GM12878 (cell line): ENCODE measurements at regions of chr6 and their contacts with region 1.

Region 1: GRCh38 chr6:16731478-16732051 is 29.7 kb downstream of the ATXN1 start:
- DNase-seq: peak; percentile 61
- ATAC-seq: peak; percentile 95
- H3K4me3 ChIP-seq: peak overlapping the region; percentile 59; the same call in 1 of the 2 replicates
- H3K27ac ChIP-seq: peak overlapping the region; percentile 28; the same call in 1 of the 2 replicates
- H3K4me1 ChIP-seq: peaks cover 17% of the 10 kb centered on the region
- H3K27me3 ChIP-seq: no peaks in the 10 kb centered on the region
- CTCF ChIP-seq: no peak
- EP300 ChIP-seq: peak; percentile 86 to 89
- POLR2A ChIP-seq: no peak
- RAD21 ChIP-seq: no peak

Region 2: DNA sequence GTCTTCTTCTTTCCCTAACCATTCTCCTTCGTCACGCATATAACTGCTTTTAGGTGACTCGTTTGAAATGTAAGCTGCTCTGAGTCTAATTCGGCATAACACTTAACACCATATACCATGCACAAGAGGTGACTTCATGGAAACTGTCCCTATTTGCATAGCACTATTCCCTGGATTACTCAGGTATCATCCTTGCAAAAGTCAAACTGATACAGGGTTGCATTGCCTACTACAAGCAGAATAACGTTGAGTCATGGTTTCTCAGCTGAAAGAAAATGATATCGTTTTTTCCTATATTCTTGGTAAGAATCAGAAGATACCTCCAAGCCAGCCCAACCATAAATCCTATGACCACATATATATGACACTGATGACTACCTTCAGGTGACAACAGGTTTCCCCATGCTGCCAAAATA is 197.8 kb before region 1 on chr6:
- CTCF ChIA-PET with region 1: no interaction called
- POLR2A ChIA-PET with region 1: no interaction called
- RAD21 ChIA-PET with region 1: no interaction called
- SMC1A ChIA-PET with region 1: no interaction called
- in situ Hi-C with region 1: no loop called
- intact Hi-C with region 1: no loop called
- DNase-seq: no peak
- ATAC-seq: peak; percentile 27
- H3K4me3 ChIP-seq: no peak overlapping the region
- H3K27ac ChIP-seq: no peak overlapping the region
- H3K4me1 ChIP-seq: no peaks in the 10 kb centered on the region
- H3K27me3 ChIP-seq: no peaks in the 10 kb centered on the region
- CTCF ChIP-seq: no peak
- EP300 ChIP-seq: no peak
- POLR2A ChIP-seq: no peak
- RAD21 ChIP-seq: no peak

Region 3: DNA sequence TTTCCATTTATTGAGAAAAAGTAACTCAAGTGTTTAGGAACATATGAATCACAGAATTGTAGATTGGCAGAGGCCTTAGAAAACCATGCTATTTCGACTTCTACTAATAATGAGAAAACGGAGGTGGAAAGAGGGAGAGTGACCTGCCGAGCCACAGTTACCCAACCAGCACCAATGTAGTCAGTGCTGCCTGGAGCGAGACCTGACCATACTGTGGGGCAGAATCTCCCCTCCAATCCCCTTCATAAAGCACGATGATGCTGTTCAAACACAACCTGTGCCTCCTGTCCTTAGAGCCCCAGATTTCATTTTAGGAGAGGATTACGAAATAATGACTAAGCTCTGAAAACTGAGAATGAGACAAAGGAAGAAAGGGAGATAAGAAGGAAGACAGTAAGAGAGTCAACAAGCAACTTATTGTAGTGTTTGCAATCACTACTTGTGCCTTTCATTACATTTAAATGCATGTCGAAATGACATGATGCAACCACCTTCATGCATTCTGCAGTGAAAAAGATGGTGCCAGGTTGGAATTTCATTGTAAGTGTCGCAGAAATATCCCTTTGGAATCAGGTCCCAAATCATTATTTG is 40.9 kb before region 1 on chr6:
- CTCF ChIA-PET with region 1: interaction called, 5 read pairs
- POLR2A ChIA-PET with region 1: no interaction called
- RAD21 ChIA-PET with region 1: interaction called, 3 read pairs
- SMC1A ChIA-PET with region 1: interaction called, 15 read pairs
- in situ Hi-C with region 1: no loop called
- intact Hi-C with region 1: no loop called
- DNase-seq: no peak
- ATAC-seq: peak; percentile 92
- H3K4me3 ChIP-seq: peak overlapping the region; percentile 13; the same call in 1 of the 2 replicates
- H3K27ac ChIP-seq: peak overlapping the region; percentile 13; the same call in 1 of the 2 replicates
- H3K4me1 ChIP-seq: peaks cover 44% of the 10 kb centered on the region
- H3K27me3 ChIP-seq: no peaks in the 10 kb centered on the region
- CTCF ChIP-seq: no peak
- EP300 ChIP-seq: peak; percentile 73 to 82
- POLR2A ChIP-seq: peak; percentile 32; the same call in 1 of the 2 replicates
- RAD21 ChIP-seq: no peak

Region 4: GRCh38 chr6:16747232-16748024 is 15.9 kb after region 1 on chr6:
- CTCF ChIA-PET with region 1: interaction called, 9 read pairs
- POLR2A ChIA-PET with region 1: interaction called, 6 read pairs
- RAD21 ChIA-PET with region 1: interaction called, 3 read pairs
- SMC1A ChIA-PET with region 1: interaction called, 36 read pairs
- in situ Hi-C with region 1: no loop called
- intact Hi-C with region 1: no loop called
- DNase-seq: no peak
- ATAC-seq: peak; percentile 44
- H3K4me3 ChIP-seq: no peak overlapping the region
- H3K27ac ChIP-seq: no peak overlapping the region
- H3K4me1 ChIP-seq: no peaks in the 10 kb centered on the region
- H3K27me3 ChIP-seq: no peaks in the 10 kb centered on the region
- CTCF ChIP-seq: no peak
- EP300 ChIP-seq: no peak
- POLR2A ChIP-seq: no peak
- RAD21 ChIP-seq: no peak

Region 5: DNA sequence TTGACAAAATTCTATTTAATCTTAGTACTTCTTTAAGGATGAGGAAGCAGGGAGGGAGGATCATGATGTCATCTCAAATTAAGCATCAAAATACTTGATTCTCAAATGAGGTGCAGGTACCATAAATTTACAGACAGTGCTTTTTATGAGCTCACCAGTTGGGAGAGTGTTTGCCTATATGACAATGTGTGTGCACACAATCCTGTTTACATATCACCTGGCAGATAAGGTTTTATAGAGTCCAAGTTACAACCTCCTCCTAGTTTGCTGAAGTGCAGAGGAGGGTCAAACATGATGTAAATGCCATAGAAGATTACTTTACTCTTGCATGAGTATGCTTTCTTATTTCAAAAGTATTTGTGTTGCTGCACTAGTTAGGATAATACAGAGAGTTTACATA is 23.3 kb after region 1 on chr6:
- CTCF ChIA-PET with region 1: interaction called, 20 read pairs
- POLR2A ChIA-PET with region 1: interaction called, 4 read pairs
- RAD21 ChIA-PET with region 1: interaction called, 29 read pairs
- SMC1A ChIA-PET with region 1: interaction called, 36 read pairs
- in situ Hi-C with region 1: no loop called
- intact Hi-C with region 1: loop called (anchors 2 kb)
- DNase-seq: no peak
- ATAC-seq: no peak
- H3K4me3 ChIP-seq: no peak overlapping the region
- H3K27ac ChIP-seq: no peak overlapping the region
- H3K4me1 ChIP-seq: peaks cover 4% of the 10 kb centered on the region; the same call in 1 of the 2 replicates
- H3K27me3 ChIP-seq: no peaks in the 10 kb centered on the region
- CTCF ChIP-seq: no peak
- EP300 ChIP-seq: no peak
- POLR2A ChIP-seq: no peak
- RAD21 ChIP-seq: no peak